Activated T-helper 2 cell treated with anti-CD3 and anti-CD28 coated beads, Interferon-gamma antibody, Interleukin-2, Interleukin-4, amounts not matched to agents 10 μg/mL and 5 μg/mL and 100 μg/mL, durations not matched to agents 14 hours and 24 hours and 36 hours (primary cell): ENCODE measurements at regions of chr12 and their contacts with region 1.

Region 1: GRCh38 chr12:64696080-64696741 is 63.0 kb downstream of the GNS start:
- DNase-seq: no peak
- H3K4me3 Mint-ChIP-seq: no peak overlapping the region
- H3K27ac Mint-ChIP-seq: no peak overlapping the region
- H3K4me1 Mint-ChIP-seq: peaks cover 39% of the 10 kb centered on the region
- H3K27me3 Mint-ChIP-seq: no peaks in the 10 kb centered on the region

Region 2: GRCh38 chr12:64549108-64549507 is 147.1 kb before region 1 on chr12:
- intact Hi-C with region 1: loop called (anchors 1 kb)
- DNase-seq: no peak
- H3K4me3 Mint-ChIP-seq: no peak overlapping the region
- H3K27ac Mint-ChIP-seq: no peak overlapping the region
- H3K4me1 Mint-ChIP-seq: peaks cover 3% of the 10 kb centered on the region
- H3K27me3 Mint-ChIP-seq: peaks cover 7% of the 10 kb centered on the region

Region 3: DNA sequence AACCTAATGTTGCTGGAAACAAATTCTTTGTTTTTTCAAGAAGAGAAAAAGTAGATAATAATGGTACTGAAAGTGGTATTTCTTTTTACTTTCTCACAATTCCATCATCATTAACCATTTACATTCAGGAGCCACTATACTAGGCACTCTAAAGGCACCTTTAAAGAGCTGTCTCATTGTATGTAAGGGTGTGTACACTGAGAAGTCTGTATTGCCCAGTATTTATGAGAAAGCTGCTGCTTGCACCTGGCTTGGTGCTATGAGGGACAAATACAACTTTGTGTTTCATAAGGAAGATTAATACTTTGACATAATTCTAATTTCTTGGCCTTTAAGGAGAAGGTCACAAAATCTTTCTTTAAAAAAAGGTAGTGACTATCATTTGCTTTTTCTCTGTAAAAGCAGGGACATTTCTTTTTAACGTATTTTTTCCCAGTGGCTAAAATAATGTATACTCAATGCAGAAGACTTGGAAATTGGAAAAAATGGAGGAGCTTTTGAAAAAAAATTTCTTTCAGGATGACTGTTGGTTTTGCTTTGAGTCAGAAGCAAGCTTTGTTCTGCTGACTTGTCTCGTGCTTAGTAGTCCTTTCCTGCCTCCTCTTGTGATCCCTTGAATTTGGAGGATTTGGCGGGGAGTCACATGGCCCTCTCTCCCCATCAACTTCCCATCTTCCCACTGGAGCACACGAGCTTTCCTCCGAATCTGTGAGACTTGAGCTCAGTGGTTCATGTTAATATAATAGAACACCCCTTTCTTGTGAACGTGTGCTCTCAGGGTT is 35.8 kb before region 1 on chr12:
- intact Hi-C with region 1: loop called (anchors 5 kb)
- DNase-seq: no peak
- H3K4me3 Mint-ChIP-seq: no peak overlapping the region
- H3K27ac Mint-ChIP-seq: peak overlapping the region; percentile 31
- H3K4me1 Mint-ChIP-seq: peaks cover 48% of the 10 kb centered on the region
- H3K27me3 Mint-ChIP-seq: no peaks in the 10 kb centered on the region